Psoas muscle (tissue), 8 donors: ENCODE measurements at regions of chr7 and their contacts with region 1.

Region 1: GRCh38 chr7:23372641-23373040 is 73.5 kb downstream of the MALSU1 start:
- DNase-seq: no peak
- ATAC-seq: no peak
- H3K4me3 ChIP-seq: no peak overlapping the region
- H3K27ac ChIP-seq: no peak overlapping the region
- H3K4me1 ChIP-seq: no peaks in the 10 kb centered on the region
- H3K27me3 ChIP-seq: no peaks in the 10 kb centered on the region
- CTCF ChIP-seq: no peak

Region 2: DNA sequence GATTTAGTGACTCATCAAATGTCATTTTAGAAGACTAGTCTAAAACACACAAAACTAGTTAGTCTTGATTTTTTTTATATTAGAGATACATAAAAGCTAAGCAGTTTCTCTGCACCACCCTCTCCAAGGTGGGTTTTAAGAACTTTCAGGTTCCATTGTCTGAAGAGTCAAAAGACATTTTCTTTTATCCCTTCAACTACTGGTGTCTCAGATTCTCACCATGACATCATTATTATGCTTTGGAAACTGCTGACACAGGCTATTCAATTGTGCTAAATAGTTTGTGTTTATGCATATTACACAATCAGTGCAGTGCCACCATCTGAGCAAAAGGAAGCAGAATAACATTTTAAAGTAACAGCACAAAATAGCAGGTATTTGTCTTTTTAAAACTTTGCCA is 45.4 kb after region 1 on chr7:
- intact Hi-C with region 1: loop called in 1 of 2 experiments (anchors 2 kb)
- DNase-seq: no peak
- ATAC-seq: no peak
- H3K4me3 ChIP-seq: no peak overlapping the region
- H3K27ac ChIP-seq: no peak overlapping the region
- H3K4me1 ChIP-seq: no peaks in the 10 kb centered on the region
- H3K27me3 ChIP-seq: no peaks in the 10 kb centered on the region
- CTCF ChIP-seq: no peak